ENCODE measurements at regions of chr9 and their contacts with region 1.

Region 1: DNA sequence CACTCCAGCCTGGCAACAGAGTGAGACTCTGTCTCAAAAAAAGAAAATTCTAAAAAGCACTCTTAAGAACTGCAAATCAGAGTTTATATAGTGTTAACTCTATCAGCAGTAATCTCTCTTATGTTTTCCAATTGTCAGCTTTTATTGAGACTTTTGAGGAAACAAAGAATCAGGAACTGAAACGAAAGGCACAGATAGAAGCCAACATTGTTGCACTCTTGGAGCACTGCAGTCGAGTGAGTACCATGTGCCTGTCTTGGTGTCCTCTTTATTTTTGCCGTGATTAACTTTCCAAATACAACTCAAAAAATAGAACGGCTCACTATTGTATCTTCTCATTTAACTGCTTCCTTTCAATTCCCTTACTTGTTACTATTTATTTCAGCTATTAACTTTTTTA is 41.7 kb upstream of the LRRC19 start:
- DNase-seq: no peak

Region 2: DNA sequence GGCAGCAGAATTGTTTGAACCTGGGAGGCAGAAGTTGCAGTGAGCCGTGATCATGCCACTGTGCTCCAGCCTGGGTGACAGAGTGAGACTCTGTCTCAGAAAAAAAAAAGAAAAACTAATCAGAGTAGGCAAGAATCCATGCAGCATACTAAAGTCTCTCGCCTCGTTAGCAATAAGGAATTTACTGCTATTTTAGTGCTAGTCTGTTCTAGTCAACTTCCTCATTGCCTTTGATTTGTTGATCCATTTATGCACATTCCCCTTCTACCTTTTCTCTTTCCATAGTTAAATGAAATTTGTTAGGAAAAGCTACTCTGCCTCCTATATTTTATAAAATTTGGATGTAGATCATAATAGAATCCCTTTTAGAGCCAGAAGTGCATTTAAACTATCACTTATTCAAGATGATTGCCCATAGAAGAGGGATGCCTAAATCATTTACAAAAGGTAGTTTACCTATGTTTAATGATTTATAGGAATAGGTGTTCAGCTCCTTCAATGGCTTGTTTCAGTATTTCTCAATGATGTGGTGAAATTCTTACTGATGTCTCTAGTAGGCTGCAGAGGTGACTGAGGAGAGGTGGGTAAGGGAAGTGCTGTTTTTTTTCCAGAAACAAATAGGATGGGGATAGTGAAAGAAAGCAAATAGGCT is 43.6 kb before region 1 on chr9:
- intact Hi-C with region 1: no loop called
- DNase-seq: no peak

Region 3: GRCh38 chr9:27261517-27262211 is 214.5 kb after region 1 on chr9:
- intact Hi-C with region 1: loop called in 1 of 2 experiments (anchors 10 kb)
- DNase-seq: no peak